Psoas muscle (tissue), 8 donors: ENCODE measurements at regions of chr5 and their contacts with region 1.

Region 1: DNA sequence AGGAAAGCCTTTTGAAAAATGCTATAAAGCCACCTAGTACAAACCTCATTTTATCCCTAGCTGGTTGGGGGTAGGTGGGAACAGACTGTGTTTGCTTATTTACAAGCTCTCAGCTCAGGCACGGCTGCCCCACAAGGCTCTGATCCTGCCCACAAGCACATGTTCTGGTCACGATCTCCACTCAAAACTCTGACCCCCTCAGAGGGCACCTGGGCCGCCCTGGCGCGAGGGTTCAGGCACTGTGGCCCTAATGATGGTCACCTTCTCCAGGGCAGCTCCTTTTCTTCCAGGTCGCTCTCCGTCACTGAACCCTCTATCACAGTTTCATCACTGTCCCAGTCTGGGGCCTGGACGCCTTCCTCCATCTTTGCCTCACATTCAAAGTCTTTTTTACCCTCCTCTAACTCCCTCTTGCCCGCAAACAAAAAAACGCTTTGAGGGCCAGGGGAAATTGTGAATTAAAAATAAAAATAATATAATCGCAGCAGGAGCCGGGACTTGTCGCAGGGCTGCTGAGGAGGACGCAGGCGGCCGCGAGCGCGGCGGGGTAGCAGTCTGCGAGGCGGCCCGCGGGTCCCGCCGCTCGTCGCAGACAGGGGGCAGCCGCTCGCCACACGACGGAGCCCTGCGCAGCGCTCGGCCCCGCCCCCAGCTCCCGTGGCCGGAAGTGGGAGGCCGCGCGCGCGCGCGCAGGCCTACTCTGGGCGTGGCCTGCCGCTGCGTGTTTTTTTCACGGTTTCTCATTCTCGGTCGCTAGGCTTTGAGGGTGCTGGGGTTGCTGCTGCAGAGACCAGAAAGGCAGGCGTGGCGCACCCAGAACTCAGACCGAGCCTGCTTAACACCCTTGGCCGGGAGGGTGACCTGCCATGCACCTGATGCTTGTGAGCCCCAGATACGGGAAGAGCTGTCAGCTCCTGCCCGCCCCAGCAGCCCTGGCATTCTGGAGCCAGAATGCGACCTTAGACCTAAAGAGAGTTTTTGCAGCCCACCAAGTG is at the start of gene ANKRD31:
- DNase-seq: peak; percentile 88 to 90
- ATAC-seq: peak; percentile 100
- H3K4me3 ChIP-seq: peak within 1 kb of the TSS; percentile 73
- H3K27ac ChIP-seq: peak within 1 kb of the TSS; percentile 2
- H3K4me1 ChIP-seq: no peaks in the 10 kb centered on the region
- H3K27me3 ChIP-seq: no peaks in the 10 kb centered on the region
- CTCF ChIP-seq: peak; percentile 85
- total RNA-seq, gene ANKRD31: 0.04 to 0.11 (median 0.06) TPM in 3 of 4 donors, not detected in the other

Region 2: DNA sequence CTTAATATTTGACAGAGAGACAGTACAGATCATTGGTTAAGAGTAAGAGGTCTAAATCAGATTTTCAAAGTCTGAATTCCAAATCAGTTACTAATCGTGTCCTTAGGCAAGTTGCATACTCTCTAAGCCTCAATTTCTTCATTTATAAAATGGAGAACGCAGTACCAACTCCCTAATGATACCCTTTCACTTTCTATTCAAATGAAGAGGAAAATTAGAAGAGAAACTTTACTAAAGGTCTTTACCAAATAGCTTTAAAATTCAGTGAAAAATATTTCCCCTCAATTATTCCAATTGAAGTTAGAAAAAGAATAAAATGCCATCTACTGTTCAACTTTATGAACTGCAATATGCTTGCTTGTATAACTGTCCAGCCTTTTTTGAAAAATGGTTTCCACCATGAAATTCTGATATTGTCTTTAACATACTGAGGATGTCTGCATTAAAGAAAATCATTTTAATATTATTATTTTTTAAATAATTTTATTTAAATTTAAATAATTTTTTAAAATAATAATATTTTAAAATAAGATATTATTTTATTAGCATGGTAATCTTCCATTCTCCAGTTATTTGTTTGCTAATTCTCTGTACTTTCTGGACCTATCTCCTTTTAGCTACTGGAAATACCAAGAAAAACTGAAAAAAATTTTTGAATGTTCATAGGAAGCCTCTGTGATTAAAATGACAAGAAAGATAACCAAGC is 444.7 kb after region 1 on chr5:
- intact Hi-C with region 1: loop called in 1 of 2 experiments (anchors 2 kb)
- DNase-seq: no peak
- ATAC-seq: peak in 1 of 4 donors; percentile 71
- H3K4me3 ChIP-seq: no peak overlapping the region
- H3K27ac ChIP-seq: no peak overlapping the region
- H3K4me1 ChIP-seq: no peaks in the 10 kb centered on the region
- H3K27me3 ChIP-seq: no peaks in the 10 kb centered on the region
- CTCF ChIP-seq: peak; percentile 82